GM12878 (cell line): ENCODE measurements at regions of chr1 and their contacts with region 1.

Region 1: DNA sequence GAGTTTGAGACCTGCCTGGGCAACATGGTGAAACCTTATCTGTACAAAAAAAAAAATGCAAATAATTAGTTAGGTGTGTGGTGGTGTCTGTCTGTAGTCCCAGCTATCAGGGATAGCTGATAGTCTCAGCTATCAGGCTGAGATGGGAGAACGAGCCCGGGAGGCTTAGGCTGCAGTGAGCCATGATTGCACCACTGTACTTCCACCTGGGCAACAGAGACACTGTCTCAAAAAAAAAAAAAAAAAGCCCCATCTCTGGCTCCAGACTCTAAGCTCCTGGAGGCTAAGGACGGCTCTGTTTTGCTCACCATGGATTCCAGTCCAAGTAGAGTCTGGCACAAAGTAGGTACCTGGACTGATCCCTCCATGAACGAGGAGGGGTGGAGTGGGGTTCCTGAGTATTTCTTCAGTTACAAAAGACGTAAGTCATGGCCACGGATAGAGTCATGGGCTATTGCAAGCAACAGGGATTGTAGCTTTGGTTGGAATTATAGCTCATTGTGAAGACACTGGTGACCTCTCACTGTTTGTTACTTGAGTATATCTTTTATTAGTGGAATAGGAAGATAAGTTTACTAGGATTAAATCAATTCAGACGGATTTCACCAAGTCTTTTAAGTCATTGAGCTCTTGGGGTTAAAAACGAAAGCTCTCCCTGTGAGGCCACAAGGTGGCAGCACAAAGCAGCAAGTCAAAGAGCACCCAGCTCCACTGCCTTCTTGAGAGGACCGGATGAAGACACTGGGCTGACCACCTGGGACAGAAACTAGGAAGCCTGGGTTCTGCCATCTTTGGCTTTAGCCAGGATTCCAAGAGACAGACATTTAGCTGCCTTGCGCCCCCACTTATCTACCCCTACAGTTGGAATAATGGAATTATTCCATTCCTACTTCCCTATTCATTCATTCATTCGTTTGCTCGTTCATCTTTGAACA is 35.6 kb upstream of the TMEM61 start:
- DNase-seq: peak; percentile 26
- ATAC-seq: peak; percentile 91
- H3K4me3 ChIP-seq: no peak overlapping the region
- H3K27ac ChIP-seq: no peak overlapping the region
- H3K4me1 ChIP-seq: no peaks in the 10 kb centered on the region
- H3K27me3 ChIP-seq: no peaks in the 10 kb centered on the region; a peak in 1 of 4 replicates
- CTCF ChIP-seq: peak; percentile 78 to 87 (median 81)
- EP300 ChIP-seq: no peak
- POLR2A ChIP-seq: no peak
- RAD21 ChIP-seq: peak; percentile 82

Region 2: DNA sequence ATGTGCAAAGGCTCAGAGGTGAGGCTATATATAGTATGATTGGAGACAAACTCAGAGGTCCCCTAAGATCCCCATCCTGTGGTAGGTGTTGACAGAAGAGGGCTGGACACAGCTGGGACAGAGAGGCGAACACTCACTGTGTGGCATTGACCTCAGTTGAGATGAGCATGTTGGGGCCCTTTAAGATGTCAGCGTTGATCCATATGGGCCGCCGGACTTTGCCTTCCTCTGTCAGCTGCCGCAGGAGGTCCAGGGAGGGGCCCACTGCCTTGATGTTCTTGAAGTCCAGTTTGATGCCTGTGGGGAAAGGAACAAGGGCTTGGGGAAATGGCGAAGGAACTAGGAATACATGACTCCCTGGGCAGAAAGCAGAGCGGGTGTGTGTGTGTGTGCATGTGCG is 330.3 kb before region 1 on chr1:
- CTCF ChIA-PET with region 1: no interaction called
- POLR2A ChIA-PET with region 1: no interaction called
- RAD21 ChIA-PET with region 1: no interaction called
- SMC1A ChIA-PET with region 1: no interaction called
- in situ Hi-C with region 1: no loop called
- intact Hi-C with region 1: no loop called
- DNase-seq: no peak
- ATAC-seq: no peak; the same call in 2 of the 3 replicates
- H3K4me3 ChIP-seq: no peak overlapping the region
- H3K27ac ChIP-seq: no peak overlapping the region
- H3K4me1 ChIP-seq: peaks cover 3% of the 10 kb centered on the region; the same call in 1 of the 2 replicates
- H3K27me3 ChIP-seq: no peaks in the 10 kb centered on the region
- CTCF ChIP-seq: no peak
- EP300 ChIP-seq: no peak
- POLR2A ChIP-seq: no peak
- RAD21 ChIP-seq: no peak

Region 3: DNA sequence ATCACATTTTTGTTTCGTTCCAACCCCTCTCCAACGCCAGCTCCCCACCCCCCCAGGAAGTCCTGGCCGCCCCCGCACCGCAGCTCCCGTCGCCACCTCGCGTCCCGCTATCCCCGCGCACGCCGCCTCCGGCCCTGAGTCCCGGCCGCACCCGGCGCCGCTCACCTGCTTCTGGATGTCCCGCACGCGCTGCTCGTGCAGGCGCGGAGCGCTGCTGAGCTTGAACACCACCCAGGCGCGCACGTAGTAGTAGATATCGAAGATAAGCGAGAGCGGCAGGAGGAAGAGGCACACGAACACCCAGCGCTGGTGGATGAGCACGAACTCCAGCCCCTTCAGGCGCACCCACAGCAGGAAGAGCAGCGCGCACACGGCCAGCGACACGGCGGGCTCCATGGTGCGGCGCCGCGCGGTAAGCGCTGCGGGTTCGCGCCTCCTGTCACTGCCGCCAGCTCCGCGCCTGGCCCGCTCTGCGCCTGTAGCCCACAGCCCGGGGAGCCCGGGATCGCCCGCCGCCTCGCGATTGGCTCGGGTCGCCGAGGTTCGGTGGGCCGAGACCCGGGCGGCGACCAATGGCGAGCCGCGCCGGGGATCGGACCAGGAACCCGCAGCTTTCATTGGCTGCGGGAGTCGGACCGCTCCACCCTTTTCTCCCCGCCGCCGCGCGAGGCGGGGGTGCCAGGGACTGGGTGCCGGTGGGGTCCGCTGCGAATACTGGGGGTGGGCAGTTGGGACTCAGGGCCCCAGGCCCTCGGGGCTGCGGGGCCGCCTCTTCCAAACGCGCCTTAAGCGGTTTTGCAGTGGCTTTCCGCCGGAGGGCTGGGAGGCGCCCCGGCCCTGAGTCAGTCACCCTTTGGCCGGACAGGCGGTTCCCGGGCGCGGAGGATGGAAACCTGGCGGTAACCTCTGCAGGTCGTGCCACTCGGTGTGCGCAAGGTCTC is 57.9 kb before region 1 on chr1 and contains the start of gene DHCR24:
- CTCF ChIA-PET with region 1: interaction called, 7 read pairs
- POLR2A ChIA-PET with region 1: no interaction called
- RAD21 ChIA-PET with region 1: interaction called, 10 read pairs
- SMC1A ChIA-PET with region 1: interaction called, 7 read pairs
- in situ Hi-C with region 1: no loop called
- intact Hi-C with region 1: no loop called
- DNase-seq: peak; percentile 45
- ATAC-seq: peak; percentile 95
- H3K4me3 ChIP-seq: peak within 1 kb of the TSS; percentile 81
- H3K27ac ChIP-seq: peak within 1 kb of the TSS; percentile 77
- H3K4me1 ChIP-seq: peaks cover 13% of the 10 kb centered on the region
- H3K27me3 ChIP-seq: no peaks in the 10 kb centered on the region
- CTCF ChIP-seq: no peak
- EP300 ChIP-seq: no peak
- POLR2A ChIP-seq: peak; percentile 98
- RAD21 ChIP-seq: no peak
- polyA plus RNA-seq, gene DHCR24: 23.3 to 39.3 TPM

Region 4: GRCh38 chr1:54959241-54959640 is 14.4 kb after region 1 on chr1:
- CTCF ChIA-PET with region 1: interaction called, 43 read pairs
- POLR2A ChIA-PET with region 1: no interaction called
- RAD21 ChIA-PET with region 1: interaction called, 7 read pairs
- SMC1A ChIA-PET with region 1: interaction called, 16 read pairs
- in situ Hi-C with region 1: no loop called
- intact Hi-C with region 1: no loop called
- DNase-seq: no peak
- ATAC-seq: no peak
- H3K4me3 ChIP-seq: no peak overlapping the region
- H3K27ac ChIP-seq: no peak overlapping the region
- H3K4me1 ChIP-seq: no peaks in the 10 kb centered on the region
- H3K27me3 ChIP-seq: no peaks in the 10 kb centered on the region
- CTCF ChIP-seq: no peak
- EP300 ChIP-seq: no peak
- POLR2A ChIP-seq: no peak
- RAD21 ChIP-seq: no peak

Region 5: DNA sequence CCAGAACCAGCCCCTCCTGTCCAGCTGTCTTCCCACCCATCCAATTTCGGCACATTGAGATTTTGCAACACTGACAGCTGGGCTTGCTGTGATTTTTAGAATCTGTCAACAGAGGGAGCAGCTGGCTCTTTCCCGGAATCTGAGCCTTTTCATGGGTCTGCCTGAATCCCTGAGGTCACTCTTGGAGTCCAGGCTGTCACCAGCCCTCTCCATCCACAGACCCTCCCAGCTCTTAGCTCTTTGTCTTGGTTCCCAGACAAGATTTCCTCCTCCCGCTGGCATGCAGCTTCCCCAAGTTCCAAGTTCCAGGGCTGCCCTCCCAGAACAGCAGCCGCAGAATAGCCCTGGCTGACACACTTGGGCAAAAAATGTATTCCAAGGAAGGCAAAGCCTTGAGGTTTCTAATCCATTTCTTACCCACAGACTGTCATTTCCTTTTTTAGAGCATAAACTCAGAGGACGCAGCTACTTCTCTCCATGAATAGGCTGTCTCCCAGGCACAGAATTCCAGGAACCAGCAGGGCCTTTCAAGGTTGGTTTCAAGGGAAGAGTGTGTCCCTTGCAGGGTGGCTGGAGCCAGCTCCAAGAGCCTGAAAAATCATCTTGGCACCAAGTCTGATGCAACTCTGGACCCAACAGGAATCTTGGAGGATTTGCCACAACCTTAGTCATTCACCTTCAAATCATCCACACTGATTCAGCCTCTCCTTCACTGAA is 28.5 kb after region 1 on chr1:
- CTCF ChIA-PET with region 1: interaction called, 19 read pairs
- POLR2A ChIA-PET with region 1: no interaction called
- RAD21 ChIA-PET with region 1: interaction called, 5 read pairs
- SMC1A ChIA-PET with region 1: interaction called, 3 read pairs
- in situ Hi-C with region 1: no loop called
- intact Hi-C with region 1: no loop called
- DNase-seq: no peak
- ATAC-seq: no peak
- H3K4me3 ChIP-seq: no peak overlapping the region
- H3K27ac ChIP-seq: no peak overlapping the region
- H3K4me1 ChIP-seq: peaks cover 10% of the 10 kb centered on the region
- H3K27me3 ChIP-seq: peaks cover 0 to 4% of the 10 kb centered on the region in 2 experiments; a peak in 1 of 4 replicates
- CTCF ChIP-seq: 0 out of 6 replicates have a peak, but pooled peaks of 1 of the 3 experiments have one; percentile 7
- EP300 ChIP-seq: no peak
- POLR2A ChIP-seq: no peak
- RAD21 ChIP-seq: no peak

Region 6: GRCh38 chr1:55015731-55016620 is 71.1 kb after region 1 on chr1:
- CTCF ChIA-PET with region 1: interaction called, 218 read pairs
- POLR2A ChIA-PET with region 1: no interaction called
- RAD21 ChIA-PET with region 1: interaction called, 10 read pairs
- SMC1A ChIA-PET with region 1: interaction called, 37 read pairs
- in situ Hi-C with region 1: no loop called
- intact Hi-C with region 1: no loop called
- DNase-seq: no peak
- ATAC-seq: no peak
- H3K4me3 ChIP-seq: no peak overlapping the region
- H3K27ac ChIP-seq: no peak overlapping the region
- H3K4me1 ChIP-seq: no peaks in the 10 kb centered on the region
- H3K27me3 ChIP-seq: peaks cover 0 to 4% of the 10 kb centered on the region in 2 experiments; a peak in 2 of 4 replicates
- CTCF ChIP-seq: no peak
- EP300 ChIP-seq: no peak
- POLR2A ChIP-seq: no peak
- RAD21 ChIP-seq: no peak